KBM-7 (cell line): ENCODE measurements at regions of chr1 and their contacts with region 1.

Region 1: DNA sequence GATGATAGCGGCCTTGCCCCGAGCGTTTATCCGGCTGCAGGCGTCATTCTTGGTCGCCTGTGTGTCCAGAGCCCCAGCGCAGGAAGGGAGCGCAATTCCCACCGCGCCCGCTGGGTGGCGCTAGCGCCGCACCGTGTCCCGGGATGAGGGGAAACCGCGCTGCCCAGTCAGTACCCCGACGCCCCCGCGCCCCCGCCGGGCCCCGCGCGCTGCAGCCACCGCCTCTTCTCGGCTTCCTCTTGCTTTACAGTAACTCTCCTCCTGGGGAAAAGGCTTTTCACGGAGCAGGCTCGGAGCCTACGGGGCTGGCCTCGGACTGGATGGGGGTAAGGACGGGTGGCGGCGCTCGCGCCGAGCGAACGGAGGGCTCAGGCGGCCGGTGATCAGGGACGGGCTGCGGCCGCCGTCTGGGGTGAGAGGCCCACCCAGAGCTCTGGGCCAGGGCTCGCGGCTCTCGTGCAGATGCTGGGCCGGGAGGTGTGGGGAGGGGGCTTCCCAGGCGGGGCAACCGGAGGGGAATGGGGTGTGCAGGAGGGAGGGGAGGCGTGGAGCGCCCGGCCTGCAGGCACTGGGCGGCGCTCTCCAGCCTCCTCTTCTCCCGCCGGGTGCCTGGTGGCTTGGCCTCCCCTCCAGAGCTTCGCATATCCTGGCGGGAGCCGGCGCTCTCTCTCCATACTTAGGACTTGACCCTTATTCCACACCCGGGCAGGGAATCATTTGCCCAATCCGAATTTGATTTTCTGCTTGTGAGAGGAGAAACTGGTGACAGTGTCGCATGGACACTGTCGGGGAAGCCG is 29.8 kb downstream of the TEX35 start:
- DNase-seq: peak; percentile 94

Region 2: GRCh38 chr1:178354816-178355215 is 187.9 kb before region 1 on chr1:
- in situ Hi-C with region 1: no loop called
- DNase-seq: no peak

Region 3: GRCh38 chr1:178768423-178768822 is 225.7 kb after region 1 on chr1:
- in situ Hi-C with region 1: loop called (anchors 25 kb)
- DNase-seq: peak; percentile 57

Region 4: DNA sequence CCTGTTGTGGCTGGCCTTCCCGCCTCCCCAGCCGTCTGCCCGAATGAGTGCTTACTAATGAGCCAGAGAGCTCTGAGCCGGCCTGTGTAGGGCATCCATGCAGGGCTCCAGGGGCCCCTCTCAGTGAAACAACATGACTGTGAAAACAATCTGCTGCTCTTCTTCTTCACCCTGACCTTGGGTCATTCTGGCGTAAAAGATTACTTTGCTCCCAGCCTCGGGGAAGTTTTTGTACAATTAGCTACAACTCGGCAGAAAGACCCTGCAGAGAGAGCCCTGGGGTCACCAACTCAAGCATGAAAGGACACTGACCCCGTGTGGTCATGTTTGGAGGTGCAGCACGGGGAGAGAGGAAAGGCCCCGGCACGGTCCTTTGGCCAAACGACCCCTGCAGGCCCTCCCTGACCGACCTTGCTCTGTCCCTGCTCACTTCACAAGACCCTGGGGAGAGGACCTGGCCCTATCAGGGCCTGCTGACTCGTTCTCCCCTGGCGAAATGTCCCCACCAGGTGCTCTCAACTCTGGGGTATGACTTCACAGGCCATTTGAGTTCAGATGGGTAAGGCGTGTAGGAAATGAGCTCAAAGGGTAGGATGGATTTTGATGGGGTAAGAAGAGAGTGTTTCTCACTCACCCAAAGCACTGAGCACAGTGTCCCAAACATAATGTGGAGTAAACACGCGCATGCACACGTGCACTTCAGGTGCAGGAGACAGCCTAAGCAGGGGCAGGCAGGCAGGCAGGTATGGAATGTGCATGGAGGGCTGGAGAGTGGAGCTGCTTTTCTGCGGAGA is 460.0 kb after region 1 on chr1:
- in situ Hi-C with region 1: loop called (anchors 25 kb)
- DNase-seq: peak; percentile 84